ENCODE measurements at regions of chr20 and their contacts with region 1.

Region 1: GRCh38 chr20:4956200-4956810 is 45.0 kb downstream of the SLC23A2 start:
- DNase-seq: peak; percentile 75
- ATAC-seq: no peak
- H3K4me3 ChIP-seq: no peak overlapping the region
- H3K27ac ChIP-seq: no peak overlapping the region
- H3K4me1 ChIP-seq: peaks cover 15% of the 10 kb centered on the region
- H3K27me3 ChIP-seq: no peaks in the 10 kb centered on the region
- CTCF ChIP-seq: peak; percentile 92
- POLR2A ChIP-seq: no peak
- RAD21 ChIP-seq: peak; percentile 87

Region 2: GRCh38 chr20:4413314-4414049 is 542.8 kb before region 1 on chr20:
- CTCF ChIA-PET with region 1: no interaction called
- POLR2A ChIA-PET with region 1: no interaction called
- dilution Hi-C with region 1: no loop called
- in situ Hi-C with region 1: no loop called
- intact Hi-C with region 1: no loop called
- DNase-seq: no peak
- ATAC-seq: no peak
- H3K4me3 ChIP-seq: no peak overlapping the region
- H3K27ac ChIP-seq: no peak overlapping the region
- H3K4me1 ChIP-seq: no peaks in the 10 kb centered on the region
- H3K27me3 ChIP-seq: peaks cover 3% of the 10 kb centered on the region
- CTCF ChIP-seq: no peak
- POLR2A ChIP-seq: no peak
- RAD21 ChIP-seq: no peak

Region 3: GRCh38 chr20:5041433-5041832 is 85.1 kb after region 1 on chr20:
- CTCF ChIA-PET with region 1: no interaction called
- POLR2A ChIA-PET with region 1: interaction called, 18 read pairs
- dilution Hi-C with region 1: no loop called
- in situ Hi-C with region 1: no loop called
- intact Hi-C with region 1: no loop called
- DNase-seq: no peak
- ATAC-seq: peak; percentile 80
- H3K4me3 ChIP-seq: no peak overlapping the region
- H3K27ac ChIP-seq: no peak overlapping the region
- H3K4me1 ChIP-seq: no peaks in the 10 kb centered on the region
- H3K27me3 ChIP-seq: peaks cover 6% of the 10 kb centered on the region
- CTCF ChIP-seq: no peak
- POLR2A ChIP-seq: no peak
- RAD21 ChIP-seq: no peak

Region 4: DNA sequence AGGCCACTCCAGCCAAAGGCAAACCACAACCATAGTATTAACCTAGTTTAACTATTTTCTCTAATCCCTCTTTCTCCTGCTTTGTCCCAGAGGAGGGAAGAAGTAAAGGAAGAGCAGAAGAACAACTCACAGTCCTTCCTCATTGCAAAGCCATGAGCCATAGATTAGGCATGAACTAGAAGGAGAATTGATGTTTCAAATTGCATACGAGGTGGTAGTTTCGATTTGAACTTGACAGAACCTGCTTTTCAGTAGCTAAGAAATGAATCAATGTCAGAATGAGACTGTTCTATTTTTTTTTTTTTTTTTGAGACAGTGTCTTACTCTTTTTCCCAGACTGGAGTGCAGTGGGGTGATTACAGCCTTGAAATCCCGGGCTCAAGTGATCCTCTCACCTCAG is 312.1 kb after region 1 on chr20:
- CTCF ChIA-PET with region 1: no interaction called
- POLR2A ChIA-PET with region 1: no interaction called
- dilution Hi-C with region 1: no loop called
- in situ Hi-C with region 1: no loop called
- intact Hi-C with region 1: no loop called
- DNase-seq: no peak
- ATAC-seq: no peak
- H3K4me3 ChIP-seq: no peak overlapping the region
- H3K27ac ChIP-seq: no peak overlapping the region
- H3K4me1 ChIP-seq: no peaks in the 10 kb centered on the region
- H3K27me3 ChIP-seq: peaks cover 2% of the 10 kb centered on the region
- CTCF ChIP-seq: no peak
- POLR2A ChIP-seq: no peak
- RAD21 ChIP-seq: no peak

Region 5: DNA sequence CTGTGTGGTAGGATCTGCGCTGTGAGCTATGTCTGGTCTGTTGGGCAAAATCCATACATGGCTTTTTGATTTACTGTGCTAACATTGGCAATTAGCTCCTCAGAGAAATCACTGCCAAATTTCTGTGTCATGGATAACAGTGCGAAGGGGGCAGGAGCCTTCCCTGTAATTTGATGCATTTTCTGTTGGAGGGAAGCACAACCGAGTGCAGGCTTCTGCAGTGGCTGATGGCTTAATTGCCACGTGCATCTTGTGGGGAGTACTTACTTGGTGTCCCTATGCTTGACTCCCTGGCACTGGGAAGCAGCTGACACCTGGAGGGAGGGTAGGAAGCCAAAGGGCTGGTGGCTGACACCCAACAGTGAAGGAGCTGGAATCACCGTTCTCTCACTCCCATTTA is 459.8 kb after region 1 on chr20:
- CTCF ChIA-PET with region 1: no interaction called
- POLR2A ChIA-PET with region 1: no interaction called
- dilution Hi-C with region 1: no loop called
- in situ Hi-C with region 1: no loop called
- intact Hi-C with region 1: no loop called
- DNase-seq: no peak
- ATAC-seq: no peak
- H3K4me3 ChIP-seq: no peak overlapping the region
- H3K27ac ChIP-seq: no peak overlapping the region
- H3K4me1 ChIP-seq: no peaks in the 10 kb centered on the region
- H3K27me3 ChIP-seq: no peaks in the 10 kb centered on the region; the same call in 1 of the 2 replicates
- CTCF ChIP-seq: no peak
- POLR2A ChIP-seq: no peak
- RAD21 ChIP-seq: no peak